ENCODE measurements at regions of chr12 and their contacts with region 1.

Region 1: GRCh38 chr12:96061864-96062453 is 26.6 kb upstream of the LTA4H start:
- DNase-seq: peak; percentile 79
- ATAC-seq: peak; percentile 87

Region 2: GRCh38 chr12:95918194-95918993 is 143.6 kb before region 1 on chr12:
- intact Hi-C with region 1: no loop called
- DNase-seq: no peak
- ATAC-seq: peak; percentile 69

Region 3: GRCh38 chr12:96047229-96048211 is 14.4 kb before region 1 on chr12:
- intact Hi-C with region 1: no loop called
- DNase-seq: no peak
- ATAC-seq: peak; percentile 91

Region 4: GRCh38 chr12:96208801-96209549 is 147.0 kb after region 1 on chr12:
- intact Hi-C with region 1: loop called (anchors 10 kb)
- DNase-seq: no peak
- ATAC-seq: peak; percentile 57

Region 5: GRCh38 chr12:96399919-96400797 is 338.2 kb after region 1 on chr12 and contains the start of gene CDK17:
- intact Hi-C with region 1: loop called (anchors 10 kb)
- DNase-seq: peak; percentile 86
- ATAC-seq: peak; percentile 89
- total RNA-seq, gene CDK17: 77.6 TPM

Region 6: DNA sequence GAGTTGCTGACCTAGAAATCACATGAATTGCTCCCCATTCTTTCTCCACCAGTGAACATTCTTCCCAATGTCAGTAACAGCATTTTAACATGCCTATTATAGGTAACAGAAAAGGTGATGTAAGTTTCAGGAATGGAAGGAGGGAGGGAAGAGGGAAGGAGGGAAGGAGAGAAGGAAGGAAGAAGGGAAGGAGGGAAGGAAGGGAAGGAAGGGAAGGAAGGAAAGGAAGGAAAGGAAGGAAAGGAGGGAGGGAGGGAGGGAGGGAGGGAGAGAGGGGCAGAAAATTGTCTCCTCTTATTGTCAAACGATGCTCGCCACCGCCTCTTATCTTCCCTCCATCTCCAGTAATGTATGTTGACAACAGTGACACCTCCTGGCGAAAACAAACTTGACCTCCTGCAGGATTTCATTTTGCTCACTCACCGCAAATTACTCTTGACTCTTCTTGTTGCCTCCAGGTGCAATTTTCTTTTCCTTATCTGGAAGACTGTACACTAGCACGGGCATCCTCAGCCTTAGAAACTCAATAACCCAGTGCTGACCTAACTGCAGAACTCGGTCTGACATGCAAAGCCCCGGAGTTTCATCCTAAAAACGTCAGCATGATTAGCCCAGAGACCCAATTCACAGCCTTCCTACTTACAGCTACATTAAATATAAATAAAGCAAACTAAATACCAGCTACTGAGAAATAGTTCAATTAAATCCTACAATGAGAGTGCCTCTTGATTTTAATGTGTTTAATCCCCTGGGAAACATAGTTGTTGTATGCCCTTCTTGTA is 1940.9 kb after region 1 on chr12:
- intact Hi-C with region 1: no loop called
- DNase-seq: no peak
- ATAC-seq: no peak